Uterus (tissue), 4 donors: ENCODE measurements at regions of chr15 and their contacts with region 1.

Region 1: DNA sequence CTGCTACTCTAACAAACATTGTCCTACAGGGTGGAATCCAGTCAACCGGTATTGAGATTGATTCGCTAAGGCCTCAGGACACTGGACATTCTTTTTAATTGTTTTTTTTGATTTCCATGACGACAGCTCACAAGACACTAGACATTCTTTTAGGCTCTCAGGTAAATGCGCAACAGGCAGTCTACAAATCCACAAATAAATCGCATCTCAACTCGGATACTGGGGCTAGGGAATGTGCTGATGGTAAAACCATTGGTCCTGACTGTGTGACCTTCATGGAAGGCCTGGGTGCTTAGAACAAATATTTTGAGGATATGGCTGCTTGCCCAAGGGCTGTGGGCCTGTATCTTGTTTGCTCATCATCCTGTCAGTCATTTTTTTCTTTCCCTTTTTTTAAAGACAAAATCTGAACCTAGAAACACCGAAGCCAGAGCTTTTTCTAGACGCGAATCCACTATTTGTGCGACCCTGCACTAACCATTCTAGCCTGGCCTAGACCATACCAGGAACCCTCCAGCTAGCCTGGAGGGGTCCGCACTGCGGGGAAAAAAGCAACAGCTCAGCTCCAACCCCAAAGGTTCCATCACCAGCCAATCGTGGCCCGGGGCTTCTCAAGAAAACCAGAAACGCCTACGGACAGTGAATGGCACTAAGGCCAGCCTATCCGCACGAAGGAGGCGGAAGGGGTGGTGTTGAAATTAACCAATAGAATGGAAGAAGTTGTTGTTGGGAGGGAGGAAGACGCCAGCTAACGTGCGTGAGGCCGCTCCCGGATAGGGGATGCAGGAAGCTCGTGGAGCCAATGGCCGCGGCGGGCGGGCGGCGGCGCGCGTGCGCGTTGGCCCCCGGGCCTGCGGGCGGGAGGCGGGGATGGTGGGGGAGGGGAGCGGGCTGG is 18.1 kb upstream of the CHD2 start:
- DNase-seq: peak; percentile 99 to 100
- H3K4me3 ChIP-seq: peak overlapping the region; percentile 33 to 37
- H3K27ac ChIP-seq: peak overlapping the region; percentile 98 to 100
- H3K4me1 ChIP-seq: no peaks in the 10 kb centered on the region
- H3K27me3 ChIP-seq: no peaks in the 10 kb centered on the region
- CTCF ChIP-seq: no peak
- POLR2A ChIP-seq: peak; percentile 70 to 97

Region 2: DNA sequence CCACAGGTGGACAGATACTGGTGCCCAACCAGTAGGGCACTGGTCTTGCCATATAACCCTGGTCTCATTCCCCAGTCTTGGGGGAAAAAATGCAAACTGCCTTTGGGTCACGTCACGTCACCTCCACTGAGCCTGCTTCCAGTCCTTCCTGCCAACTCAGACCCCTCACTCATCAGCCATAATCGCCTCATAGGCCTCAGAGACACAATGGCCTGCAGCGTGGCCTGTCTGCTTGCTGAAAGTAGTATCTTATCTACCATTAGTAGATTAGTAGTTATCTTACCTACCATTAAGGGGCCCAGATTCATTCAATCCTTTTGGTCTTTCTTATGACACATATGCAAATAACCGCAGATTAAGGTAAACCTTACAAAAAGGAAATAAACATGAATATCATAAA is 320.3 kb before region 1 on chr15:
- intact Hi-C with region 1: no loop called
- DNase-seq: no peak
- H3K4me3 ChIP-seq: no peak overlapping the region
- H3K27ac ChIP-seq: no peak overlapping the region
- H3K4me1 ChIP-seq: no peaks in the 10 kb centered on the region
- H3K27me3 ChIP-seq: no peaks in the 10 kb centered on the region
- CTCF ChIP-seq: no peak
- POLR2A ChIP-seq: no peak

Region 3: GRCh38 chr15:92772626-92773244 is 109.3 kb before region 1 on chr15:
- intact Hi-C with region 1: no loop called
- DNase-seq: no peak
- H3K4me3 ChIP-seq: no peak overlapping the region
- H3K27ac ChIP-seq: no peak overlapping the region
- H3K4me1 ChIP-seq: no peaks in the 10 kb centered on the region
- H3K27me3 ChIP-seq: no peaks in the 10 kb centered on the region
- CTCF ChIP-seq: no peak
- POLR2A ChIP-seq: no peak

Region 4: GRCh38 chr15:92831655-92832328 is 50.3 kb before region 1 on chr15:
- intact Hi-C with region 1: loop called (anchors 5 kb)
- DNase-seq: peak; percentile 84 to 92
- H3K4me3 ChIP-seq: peak overlapping the region; percentile 13 to 20
- H3K27ac ChIP-seq: peak overlapping the region; percentile 86 to 98
- H3K4me1 ChIP-seq: peaks cover 14 to 24% of the 10 kb centered on the region in 2 donors
- H3K27me3 ChIP-seq: no peaks in the 10 kb centered on the region
- CTCF ChIP-seq: peak in 1 of 4 experiments; percentile 17
- POLR2A ChIP-seq: peak; percentile 83 to 95